PC-3 (cell line): ENCODE measurements at regions of chr19 and their contacts with region 1.

Region 1: GRCh38 chr19:14517840-14518505 is at the start of gene DNAJB1:
- DNase-seq: peak; percentile 76
- ATAC-seq: peak; percentile 63
- H3K4me3 ChIP-seq: peak within 1 kb of the TSS; percentile 96
- H3K27ac ChIP-seq: peak within 1 kb of the TSS; percentile 93
- H3K4me1 ChIP-seq: peaks cover 43% of the 10 kb centered on the region
- H3K27me3 ChIP-seq: no peaks in the 10 kb centered on the region
- CTCF ChIP-seq: no peak
- total RNA-seq, gene DNAJB1: 167 and 178 TPM in 2 replicates

Region 2: GRCh38 chr19:14487370-14488125 is 30.4 kb before region 1 on chr19:
- CTCF ChIA-PET with region 1: no interaction called
- POLR2A ChIA-PET with region 1: no interaction called
- intact Hi-C with region 1: loop called (anchors 2 kb)
- DNase-seq: no peak
- ATAC-seq: no peak
- H3K4me3 ChIP-seq: no peak overlapping the region
- H3K27ac ChIP-seq: no peak overlapping the region
- H3K4me1 ChIP-seq: no peaks in the 10 kb centered on the region
- H3K27me3 ChIP-seq: no peaks in the 10 kb centered on the region
- CTCF ChIP-seq: no peak

Region 3: GRCh38 chr19:14505488-14506432 is 12.2 kb before region 1 on chr19:
- CTCF ChIA-PET with region 1: interaction called, 6 read pairs
- POLR2A ChIA-PET with region 1: interaction called, 12 read pairs
- intact Hi-C with region 1: loop called (anchors 1 kb)
- DNase-seq: peak; percentile 99
- ATAC-seq: peak; percentile 83
- H3K4me3 ChIP-seq: peak overlapping the region; percentile 41
- H3K27ac ChIP-seq: peak overlapping the region; percentile 96
- H3K4me1 ChIP-seq: peaks cover 74% of the 10 kb centered on the region
- H3K27me3 ChIP-seq: no peaks in the 10 kb centered on the region
- CTCF ChIP-seq: peak; percentile 93

Region 4: DNA sequence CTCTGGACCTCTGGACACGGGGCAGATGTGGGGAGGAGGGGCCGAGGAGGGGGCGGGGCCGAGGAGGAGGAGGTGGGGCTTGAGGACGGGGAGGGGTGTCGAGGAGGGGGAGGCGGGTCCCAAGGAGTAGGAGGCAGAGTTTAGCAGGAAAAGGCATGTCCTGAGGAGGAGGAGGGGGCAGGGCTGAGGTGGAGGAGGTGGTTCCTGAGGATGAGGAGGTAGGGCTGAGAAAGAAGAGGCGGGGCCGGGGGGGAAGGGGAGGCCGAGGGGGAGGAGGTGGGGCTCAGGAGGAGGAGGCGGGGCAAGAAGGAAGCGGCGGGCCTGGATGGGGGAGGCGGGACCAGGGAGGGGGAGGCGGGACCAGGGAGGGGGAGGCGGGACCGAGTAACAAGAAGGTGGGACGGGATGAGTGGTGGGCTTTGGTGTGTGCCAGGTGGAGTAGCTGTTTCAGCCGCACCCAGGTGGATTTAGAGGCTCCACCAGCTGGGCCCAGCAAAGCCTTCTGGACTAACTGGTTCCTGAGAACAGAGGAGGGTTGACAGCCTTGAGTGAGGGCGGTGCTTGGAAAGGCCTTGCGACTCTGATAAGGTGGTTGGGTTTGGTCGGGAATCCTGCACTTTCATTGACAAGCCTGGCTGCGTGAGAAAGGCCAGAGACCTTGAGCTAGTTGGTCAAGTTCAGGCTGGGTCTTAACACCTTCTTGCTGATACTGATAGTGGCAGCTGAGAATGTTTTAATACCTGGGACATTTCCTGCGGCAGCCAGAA is 19.1 kb after region 1 on chr19:
- CTCF ChIA-PET with region 1: no interaction called
- POLR2A ChIA-PET with region 1: interaction called, 20 read pairs
- intact Hi-C with region 1: no loop called
- DNase-seq: peak; percentile 88
- ATAC-seq: peak; percentile 87
- H3K4me3 ChIP-seq: peak overlapping the region; percentile 56
- H3K27ac ChIP-seq: peak overlapping the region; percentile 37; the same call in 1 of the 2 replicates
- H3K4me1 ChIP-seq: peaks cover 9% of the 10 kb centered on the region
- H3K27me3 ChIP-seq: no peaks in the 10 kb centered on the region
- CTCF ChIP-seq: no peak